ENCODE measurements at regions of chr17 and their contacts with region 1.

Region 1: GRCh38 chr17:69575346-69575761 is 160.9 kb downstream of the MAP2K6 start:
- DNase-seq: peak; percentile 62
- H3K4me3 ChIP-seq: no peak overlapping the region
- H3K27me3 ChIP-seq: no peaks in the 10 kb centered on the region
- CTCF ChIP-seq: no peak

Region 2: DNA sequence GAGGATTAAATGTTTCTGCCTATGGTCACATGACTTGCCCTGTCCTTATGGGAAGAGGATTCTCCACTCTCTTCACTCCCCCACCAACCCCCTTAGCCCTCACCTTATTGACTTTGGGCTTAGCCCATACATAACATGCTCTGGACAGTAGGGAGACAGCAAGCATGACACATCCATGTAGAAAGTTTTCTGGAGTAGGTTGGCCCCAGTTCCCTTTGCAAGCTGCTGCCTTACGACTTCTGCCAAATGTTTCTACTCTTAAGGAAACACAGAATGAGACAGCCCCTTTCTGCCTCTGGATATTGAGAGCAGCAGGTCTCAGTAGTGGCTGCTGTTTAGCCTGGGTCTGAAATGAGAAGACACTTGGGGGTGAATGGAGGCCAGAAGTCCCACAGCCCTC is 121.3 kb after region 1 on chr17:
- CTCF ChIA-PET with region 1: no interaction called
- POLR2A ChIA-PET with region 1: no interaction called
- DNase-seq: no peak
- H3K4me3 ChIP-seq: no peak overlapping the region
- H3K27me3 ChIP-seq: no peaks in the 10 kb centered on the region
- CTCF ChIP-seq: no peak

Region 3: DNA sequence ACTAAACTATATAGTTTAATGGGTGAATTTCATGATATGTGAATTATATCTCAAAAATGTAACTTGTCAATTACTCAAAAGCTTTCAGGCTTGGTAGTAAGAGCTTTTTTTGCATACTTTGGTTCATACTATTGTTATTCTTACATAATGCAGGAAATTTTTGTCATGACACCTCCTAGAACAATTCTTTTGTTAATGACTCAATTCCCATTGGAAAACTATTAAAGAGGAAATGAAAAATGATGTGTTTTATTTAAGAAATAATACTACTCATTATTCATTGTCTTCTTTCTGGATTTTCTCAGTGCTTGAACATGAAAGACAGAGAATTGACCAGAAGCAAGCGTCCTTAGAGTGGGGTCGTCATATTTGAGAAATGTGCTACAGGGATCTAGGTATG is 303.3 kb after region 1 on chr17:
- CTCF ChIA-PET with region 1: no interaction called
- POLR2A ChIA-PET with region 1: no interaction called
- DNase-seq: no peak
- H3K4me3 ChIP-seq: no peak overlapping the region
- H3K27me3 ChIP-seq: no peaks in the 10 kb centered on the region
- CTCF ChIP-seq: no peak

Region 4: DNA sequence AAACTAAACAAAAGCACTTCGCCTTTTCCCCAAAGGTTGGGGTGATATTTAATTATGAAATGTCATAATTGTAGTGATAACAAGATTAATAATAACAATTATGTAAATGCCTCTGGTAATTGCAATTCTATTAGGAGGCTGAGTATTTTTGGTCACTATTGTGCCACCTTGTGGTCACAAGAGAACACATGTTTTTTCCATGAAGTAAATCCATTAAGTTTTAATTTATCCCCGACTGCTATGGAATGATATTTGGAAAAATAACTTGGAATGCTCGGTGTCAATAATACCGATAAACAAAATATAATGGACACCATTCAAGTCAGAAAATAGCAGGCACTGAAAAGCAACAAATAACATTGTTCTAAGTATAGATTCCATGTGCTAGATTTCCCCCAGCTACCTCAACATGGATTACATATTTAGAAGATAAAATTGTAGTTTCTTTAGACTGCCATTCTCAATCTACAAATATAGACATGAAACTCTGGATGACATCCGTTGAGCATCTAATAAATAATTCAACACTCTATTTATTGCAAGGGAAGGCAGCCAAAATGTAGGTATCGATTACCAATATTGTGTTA is 569.0 kb after region 1 on chr17:
- CTCF ChIA-PET with region 1: interaction called, 10 read pairs
- POLR2A ChIA-PET with region 1: no interaction called
- DNase-seq: no peak
- H3K4me3 ChIP-seq: no peak overlapping the region
- H3K27me3 ChIP-seq: no peaks in the 10 kb centered on the region
- CTCF ChIP-seq: peak; percentile 54; the same call in 1 of the 2 replicates

Region 5: GRCh38 chr17:70552230-70552981 is 977.1 kb after region 1 on chr17:
- CTCF ChIA-PET with region 1: interaction called, 25 read pairs
- POLR2A ChIA-PET with region 1: no interaction called
- DNase-seq: no peak
- H3K4me3 ChIP-seq: no peak overlapping the region
- H3K27me3 ChIP-seq: no peaks in the 10 kb centered on the region
- CTCF ChIP-seq: peak; percentile 40